Panc1 (cell line): ENCODE measurements at regions of chr7 and their contacts with region 1.

Region 1: GRCh38 chr7:39642896-39643295 is 19.5 kb downstream of the RALA start:
- DNase-seq: no peak
- ATAC-seq: no peak
- H3K4me3 ChIP-seq: no peak overlapping the region
- H3K27ac ChIP-seq: no peak overlapping the region
- H3K4me1 ChIP-seq: peaks cover 6% of the 10 kb centered on the region; the same call in 1 of the 2 replicates
- H3K27me3 ChIP-seq: no peaks in the 10 kb centered on the region
- CTCF ChIP-seq: no peak

Region 2: DNA sequence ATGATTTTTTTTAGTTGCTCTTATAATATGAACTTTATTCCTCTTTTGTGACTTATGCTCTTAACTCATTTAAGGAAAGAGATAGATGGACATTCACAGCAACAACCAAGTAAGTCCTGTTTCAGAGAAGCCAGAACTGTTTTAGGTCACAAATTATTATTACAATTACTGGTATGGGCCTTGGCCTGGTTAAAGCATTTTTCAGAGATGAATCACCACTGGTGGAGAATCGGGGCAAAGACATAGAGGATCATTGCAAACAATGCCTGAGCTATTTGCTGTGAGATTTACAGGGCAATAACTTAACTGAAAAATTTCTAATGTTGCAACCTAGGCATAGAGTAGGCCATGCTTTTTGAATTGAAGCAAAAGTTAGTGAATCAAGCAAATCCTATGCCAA is 214.7 kb before region 1 on chr7:
- CTCF ChIA-PET with region 1: no interaction called
- POLR2A ChIA-PET with region 1: no interaction called
- in situ Hi-C with region 1: no loop called
- intact Hi-C with region 1: no loop called
- DNase-seq: no peak
- ATAC-seq: no peak
- H3K4me3 ChIP-seq: no peak overlapping the region
- H3K27ac ChIP-seq: no peak overlapping the region
- H3K4me1 ChIP-seq: no peaks in the 10 kb centered on the region
- H3K27me3 ChIP-seq: no peaks in the 10 kb centered on the region; the same call in 1 of the 2 replicates
- CTCF ChIP-seq: no peak

Region 3: GRCh38 chr7:39592586-39592985 is 50.3 kb before region 1 on chr7:
- CTCF ChIA-PET with region 1: no interaction called
- POLR2A ChIA-PET with region 1: interaction called, 10 read pairs
- in situ Hi-C with region 1: no loop called
- intact Hi-C with region 1: no loop called
- DNase-seq: no peak
- ATAC-seq: no peak
- H3K4me3 ChIP-seq: no peak overlapping the region
- H3K27ac ChIP-seq: no peak overlapping the region
- H3K4me1 ChIP-seq: no peaks in the 10 kb centered on the region
- H3K27me3 ChIP-seq: no peaks in the 10 kb centered on the region; the same call in 1 of the 2 replicates
- CTCF ChIP-seq: no peak

Region 4: DNA sequence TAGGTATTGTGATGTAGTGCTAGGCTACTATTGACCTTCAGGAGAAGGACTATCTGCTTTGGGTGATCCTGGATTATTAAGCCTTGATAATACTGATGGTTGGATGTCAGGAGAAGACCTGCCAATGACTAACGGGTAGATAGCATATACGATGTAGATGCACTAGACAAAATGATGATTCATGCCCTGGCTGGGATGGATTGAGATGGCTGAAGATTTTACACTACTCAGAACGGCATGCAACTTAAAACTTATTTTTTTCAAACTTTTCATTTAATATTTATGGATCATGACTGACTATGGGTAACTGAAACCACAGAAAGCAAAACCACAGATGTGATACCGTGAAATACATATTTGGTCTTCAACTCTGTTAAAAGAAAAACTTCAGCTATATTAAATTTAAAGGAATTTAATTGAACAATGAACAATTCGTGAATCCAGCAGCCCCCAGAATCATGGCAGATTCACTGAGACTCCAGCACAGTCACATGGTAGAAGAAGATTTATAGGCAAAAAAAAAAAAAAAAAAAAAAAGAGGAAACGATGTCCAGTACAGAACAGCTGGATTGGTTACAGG is 182.6 kb after region 1 on chr7:
- CTCF ChIA-PET with region 1: no interaction called
- POLR2A ChIA-PET with region 1: no interaction called
- in situ Hi-C with region 1: no loop called
- intact Hi-C with region 1: no loop called
- DNase-seq: no peak
- ATAC-seq: no peak
- H3K4me3 ChIP-seq: no peak overlapping the region
- H3K27ac ChIP-seq: no peak overlapping the region
- H3K4me1 ChIP-seq: no peaks in the 10 kb centered on the region
- H3K27me3 ChIP-seq: peaks cover 51% of the 10 kb centered on the region
- CTCF ChIP-seq: no peak